ENCODE measurements at regions of chr13 and their contacts with region 1.

Region 1: DNA sequence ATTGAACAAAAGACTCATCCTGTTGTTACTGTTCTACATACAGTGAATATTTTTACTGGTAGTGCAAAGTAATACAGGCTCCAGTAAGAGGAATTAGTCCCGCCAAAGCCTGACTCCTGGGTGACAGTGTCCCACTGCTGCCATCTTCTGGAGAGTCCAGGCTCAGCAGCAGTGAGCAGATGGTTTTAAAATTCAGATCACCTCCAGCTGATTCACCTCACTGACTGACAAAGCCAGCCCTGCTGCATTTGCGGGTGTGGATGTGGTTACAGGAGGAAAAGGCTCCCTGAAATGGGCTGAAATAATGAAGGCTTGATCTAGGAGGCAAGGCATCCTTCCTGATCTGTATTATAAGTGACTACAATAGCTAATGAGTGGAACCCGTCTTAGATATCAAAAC is 18.3 kb downstream of the PABPC3 start:
- DNase-seq: peak; percentile 82 to 93 (median 88)
- H3K4me3 ChIP-seq: no peak overlapping the region
- H3K27ac ChIP-seq: no peak overlapping the region
- H3K4me1 ChIP-seq: peaks cover 0 to 2% (median under 1%) of the 10 kb centered on the region in 4 experiments
- H3K27me3 ChIP-seq: peaks cover 0 to 29% (median 7%) of the 10 kb centered on the region in 5 experiments

Region 2: GRCh38 chr13:25095862-25096453 is 18.3 kb before region 1 on chr13 and contains the start of gene PABPC3:
- CTCF ChIA-PET with region 1: interaction called, 10 read pairs
- POLR2A ChIA-PET with region 1: no interaction called
- DNase-seq: peak; percentile 18 to 67 (median 50)
- H3K4me3 ChIP-seq: peak within 1 kb of the TSS in 6 of 7 experiments; percentile 6 to 68 (median 45)
- H3K27ac ChIP-seq: no peak within 1 kb of the TSS
- H3K4me1 ChIP-seq: peaks cover 0 to 3% (median 1%) of the 10 kb centered on the region in 4 experiments
- H3K27me3 ChIP-seq: peaks cover 0 to 17% (median 7%) of the 10 kb centered on the region in 5 experiments

Region 3: DNA sequence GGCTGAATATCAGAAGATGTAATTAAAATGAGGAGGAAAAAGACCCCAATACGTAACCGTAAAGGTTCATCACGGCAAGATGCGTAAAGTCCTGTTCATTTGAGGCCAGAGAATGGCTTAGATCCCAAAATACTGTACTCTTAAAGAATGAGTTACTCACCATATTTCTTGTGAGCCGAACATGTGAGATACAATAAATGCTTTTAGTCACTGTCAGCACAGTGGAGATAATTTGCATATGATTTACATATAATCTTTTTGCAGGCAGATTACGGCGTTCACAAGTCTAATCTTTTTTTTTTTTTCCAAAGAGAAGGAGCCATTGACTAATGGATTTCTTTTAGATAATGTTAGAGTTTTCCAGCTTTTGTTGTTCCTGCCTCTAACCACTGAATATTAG is 29.5 kb after region 1 on chr13:
- CTCF ChIA-PET with region 1: no interaction called
- POLR2A ChIA-PET with region 1: no interaction called
- DNase-seq: no peak
- H3K4me3 ChIP-seq: no peak overlapping the region
- H3K27ac ChIP-seq: no peak overlapping the region
- H3K4me1 ChIP-seq: no peaks in the 10 kb centered on the region
- H3K27me3 ChIP-seq: peaks cover 0 to 30% (median 9%) of the 10 kb centered on the region in 5 experiments

Measured in common myeloid progenitor, CD34-positive (primary cell).